BJ (cell line): ENCODE measurements at regions of chr15 and their contacts with region 1.

Region 1: GRCh38 chr15:52193791-52194190 is 2.6 kb upstream of the GNB5 start:
- DNase-seq: no peak
- H3K4me3 ChIP-seq: no peak overlapping the region
- H3K27me3 ChIP-seq: peaks cover 2% of the 10 kb centered on the region; the same call in 1 of the 2 replicates
- CTCF ChIP-seq: no peak

Region 2: DNA sequence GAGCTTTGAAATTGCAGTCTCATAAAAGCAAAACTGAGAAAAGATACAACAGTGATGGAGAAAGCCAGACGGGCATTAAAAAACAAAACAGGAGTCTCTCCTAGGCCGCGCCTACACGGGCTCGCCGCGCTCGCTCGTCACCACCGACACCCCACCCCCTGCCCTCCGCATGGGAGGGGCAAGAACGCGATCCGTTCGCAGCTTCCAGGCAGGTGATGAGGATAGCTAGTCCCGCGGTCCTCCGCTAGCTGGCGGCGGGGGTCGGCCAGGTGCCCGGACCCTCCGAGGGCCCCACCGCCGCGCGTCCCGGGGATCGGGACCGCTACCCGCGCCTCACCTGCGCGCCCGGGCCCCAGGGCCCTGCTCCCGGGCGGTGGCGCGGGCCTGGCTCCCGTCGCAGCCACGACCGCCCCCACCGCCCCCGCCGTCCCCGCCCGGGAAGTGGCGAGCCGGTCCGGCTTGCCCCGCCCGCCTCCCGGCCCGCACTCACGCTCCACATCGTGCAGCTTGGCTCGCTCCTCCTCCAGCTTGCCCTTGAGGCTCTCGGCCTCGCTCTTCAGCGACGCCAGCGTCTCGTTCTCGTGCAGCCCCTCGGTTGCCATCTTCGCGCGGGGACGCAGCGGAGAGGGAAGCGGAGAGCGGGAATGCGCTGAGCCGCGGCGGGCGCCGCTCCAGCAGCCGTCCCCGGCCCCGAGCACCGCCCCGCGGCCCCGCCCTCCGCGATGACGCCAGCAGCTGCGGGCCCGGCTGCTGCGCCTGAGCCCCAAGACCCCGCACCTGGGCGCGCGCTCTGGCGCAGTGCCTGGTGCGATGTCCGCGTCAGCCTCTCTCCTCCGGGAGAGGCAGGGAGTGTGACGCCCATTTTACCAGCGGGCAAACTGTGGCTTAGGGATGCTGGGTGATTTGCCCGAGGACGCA is 14.3 kb before region 1 on chr15:
- CTCF ChIA-PET with region 1: interaction called, 19 read pairs
- POLR2A ChIA-PET with region 1: no interaction called
- DNase-seq: no peak
- H3K4me3 ChIP-seq: peak overlapping the region; percentile 82
- H3K27me3 ChIP-seq: no peaks in the 10 kb centered on the region
- CTCF ChIP-seq: no peak

Region 3: GRCh38 chr15:52208306-52208946 is 14.6 kb after region 1 on chr15:
- CTCF ChIA-PET with region 1: interaction called, 14 read pairs
- POLR2A ChIA-PET with region 1: no interaction called
- DNase-seq: no peak
- H3K4me3 ChIP-seq: no peak overlapping the region
- H3K27me3 ChIP-seq: no peaks in the 10 kb centered on the region
- CTCF ChIP-seq: peak; percentile 82